ENCODE measurements at regions of chr3 and their contacts with region 1.

Region 1: DNA sequence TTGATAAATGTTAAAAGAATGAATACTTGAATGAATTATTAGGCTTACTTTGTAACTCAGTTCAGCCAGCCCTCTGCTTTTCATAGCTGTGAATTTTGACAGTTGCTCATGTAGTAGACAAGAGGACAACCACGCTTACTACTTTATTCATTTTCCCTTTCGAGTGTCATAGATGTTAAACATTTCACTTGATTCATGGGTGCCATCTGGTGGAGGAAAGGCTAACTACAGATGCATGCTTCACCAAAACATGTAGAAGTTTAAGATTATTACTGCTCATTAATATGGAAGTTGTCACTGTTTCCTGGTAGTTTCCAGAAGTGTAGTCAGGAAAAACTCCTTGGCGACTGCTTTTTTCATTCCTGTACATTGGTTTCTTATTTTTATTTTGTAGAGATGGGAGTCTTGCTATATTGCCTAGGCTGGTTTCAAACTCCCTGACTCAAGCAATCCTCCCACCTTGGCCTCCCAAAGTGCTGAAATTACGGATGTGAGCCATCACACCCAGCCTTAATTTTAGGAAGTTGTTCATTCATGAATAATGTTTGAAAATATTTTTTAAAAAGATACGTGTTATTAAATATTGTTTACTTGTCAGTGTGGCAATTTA is 163.2 kb downstream of the B3GALNT1 start:
- DNase-seq: peak; percentile 22 to 65
- ATAC-seq: peak; percentile 85 to 89
- H3K4me3 ChIP-seq: no peak overlapping the region
- H3K27ac ChIP-seq: no peak overlapping the region
- H3K4me1 ChIP-seq: no peaks in the 10 kb centered on the region
- CTCF ChIP-seq: peak; percentile 80
- EP300 ChIP-seq: no peak
- POLR2A ChIP-seq: no peak
- RAD21 ChIP-seq: peak; percentile 80 to 82

Region 2: DNA sequence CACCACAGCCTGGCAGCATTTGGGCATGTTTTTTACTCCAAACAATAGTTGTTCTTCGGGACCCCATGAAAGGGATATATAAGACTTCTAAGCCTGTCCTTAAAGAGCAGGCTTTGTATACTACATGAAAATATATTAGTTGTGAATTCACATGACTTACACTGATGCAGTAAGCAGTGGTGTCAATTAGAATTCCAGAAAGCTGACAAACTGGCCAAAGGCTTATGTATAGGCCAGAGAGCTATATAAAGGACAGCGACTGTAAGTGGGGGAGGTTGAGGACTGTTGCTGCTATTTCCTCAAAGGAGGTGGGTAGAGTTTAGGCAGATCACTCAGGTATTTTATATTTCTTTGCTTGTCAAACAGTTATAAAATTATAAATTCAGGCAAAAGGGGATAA is 401.4 kb before region 1 on chr3:
- CTCF ChIA-PET with region 1: no interaction called
- POLR2A ChIA-PET with region 1: no interaction called
- DNase-seq: no peak
- ATAC-seq: no peak
- H3K4me3 ChIP-seq: no peak overlapping the region
- H3K27ac ChIP-seq: no peak overlapping the region
- H3K4me1 ChIP-seq: peaks cover 9% of the 10 kb centered on the region; the same call in 2 of the 3 replicates
- CTCF ChIP-seq: no peak
- EP300 ChIP-seq: no peak
- POLR2A ChIP-seq: no peak
- RAD21 ChIP-seq: no peak

Region 3: DNA sequence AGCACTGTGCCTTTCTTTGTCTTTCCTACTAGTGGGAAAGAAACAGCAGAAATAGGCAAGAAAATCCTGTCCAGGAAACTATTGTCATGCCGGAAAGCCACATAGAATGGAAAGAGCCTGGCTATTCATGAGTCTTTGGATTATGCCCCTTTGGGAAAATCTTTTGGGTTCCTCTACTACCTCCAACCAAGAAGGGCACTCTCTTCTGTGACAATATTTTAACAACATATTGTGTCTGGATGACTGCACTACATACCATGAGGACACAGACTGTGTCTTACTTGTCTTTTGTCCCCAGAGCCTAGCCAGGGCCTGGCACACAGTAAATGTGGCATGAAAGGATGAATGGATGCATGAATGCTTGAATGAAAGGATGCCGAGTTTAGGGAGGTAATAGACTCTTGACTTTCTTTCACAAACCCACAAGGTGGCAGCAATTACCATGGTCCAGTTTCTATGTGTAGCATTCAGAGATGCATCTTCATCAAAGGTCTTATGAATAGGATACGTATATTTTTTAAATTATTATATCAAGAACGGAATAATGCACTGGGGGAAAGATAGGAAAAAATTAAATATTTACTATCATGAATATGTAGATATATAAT is 234.7 kb before region 1 on chr3:
- CTCF ChIA-PET with region 1: interaction called, 20 read pairs
- POLR2A ChIA-PET with region 1: no interaction called
- DNase-seq: peak; percentile 23 to 60
- ATAC-seq: peak; percentile 65 to 93; a peak in 4 of 6 replicates
- H3K4me3 ChIP-seq: no peak overlapping the region
- H3K27ac ChIP-seq: no peak overlapping the region
- H3K4me1 ChIP-seq: no peaks in the 10 kb centered on the region
- CTCF ChIP-seq: peak; percentile 61
- EP300 ChIP-seq: no peak
- POLR2A ChIP-seq: no peak
- RAD21 ChIP-seq: peak; percentile 74 to 77

Region 4: GRCh38 chr3:160885791-160886286 is 56.2 kb before region 1 on chr3:
- CTCF ChIA-PET with region 1: no interaction called
- POLR2A ChIA-PET with region 1: no interaction called
- DNase-seq: no peak
- ATAC-seq: no peak
- H3K4me3 ChIP-seq: no peak overlapping the region
- H3K27ac ChIP-seq: no peak overlapping the region
- H3K4me1 ChIP-seq: no peaks in the 10 kb centered on the region
- CTCF ChIP-seq: no peak
- EP300 ChIP-seq: no peak
- POLR2A ChIP-seq: no peak
- RAD21 ChIP-seq: no peak

Region 5: GRCh38 chr3:160921020-160921635 is 20.9 kb before region 1 on chr3:
- CTCF ChIA-PET with region 1: interaction called, 45 read pairs
- POLR2A ChIA-PET with region 1: no interaction called
- DNase-seq: peak; percentile 46 to 54
- ATAC-seq: peak; percentile 93 to 95
- H3K4me3 ChIP-seq: no peak overlapping the region
- H3K27ac ChIP-seq: no peak overlapping the region
- H3K4me1 ChIP-seq: no peaks in the 10 kb centered on the region
- CTCF ChIP-seq: peak; percentile 78
- EP300 ChIP-seq: no peak
- POLR2A ChIP-seq: no peak
- RAD21 ChIP-seq: peak; percentile 79 to 80

Region 6: DNA sequence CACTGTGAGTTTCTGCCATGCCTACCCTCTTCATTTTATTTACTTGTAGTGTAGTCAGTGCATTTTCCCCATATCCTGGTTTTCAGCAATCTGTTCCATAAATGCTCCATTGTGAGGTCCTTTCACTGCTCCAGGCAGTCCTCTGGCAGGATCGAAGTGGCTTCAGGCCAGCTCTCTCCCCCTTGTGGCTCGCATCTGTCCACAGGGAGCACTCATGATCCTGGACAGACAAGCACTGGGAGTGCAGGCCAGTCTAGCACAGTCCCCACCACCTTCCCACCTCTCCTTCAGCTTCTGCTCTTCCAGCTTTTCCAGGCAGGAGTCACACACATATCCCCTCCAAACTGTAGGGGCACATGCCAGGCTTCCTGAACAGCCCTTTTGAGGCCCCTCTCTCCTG is 12.4 kb before region 1 on chr3:
- CTCF ChIA-PET with region 1: interaction called, 45 read pairs
- POLR2A ChIA-PET with region 1: no interaction called
- DNase-seq: peak in 1 of 2 experiments; percentile 7
- ATAC-seq: peak; percentile 63 to 77; a peak in 5 of 6 replicates
- H3K4me3 ChIP-seq: no peak overlapping the region
- H3K27ac ChIP-seq: no peak overlapping the region
- H3K4me1 ChIP-seq: no peaks in the 10 kb centered on the region
- CTCF ChIP-seq: no peak
- EP300 ChIP-seq: no peak
- POLR2A ChIP-seq: no peak
- RAD21 ChIP-seq: no peak

Measured in A549 (cell line).